Mucosa of descending colon (tissue), 3 donors: ENCODE measurements at regions of chr7 and their contacts with region 1.

Region 1: GRCh38 chr7:1225441-1226185 is 7.1 kb upstream of the UNCX start:
- DNase-seq: peak in 2 of 3 donors; percentile 41 to 47
- ATAC-seq: peak; percentile 59
- H3K4me3 ChIP-seq: no peak overlapping the region
- H3K4me1 ChIP-seq: no peaks in the 10 kb centered on the region
- CTCF ChIP-seq: peak; percentile 51

Region 2: GRCh38 chr7:1480670-1481069 is 255.1 kb after region 1 on chr7:
- intact Hi-C with region 1: loop called in 1 of 2 experiments (anchors 10 kb)
- DNase-seq: no peak
- ATAC-seq: no peak
- H3K4me3 ChIP-seq: no peak overlapping the region
- H3K4me1 ChIP-seq: no peaks in the 10 kb centered on the region
- CTCF ChIP-seq: no peak